GM10248 (cell line): ENCODE measurements at regions of chr1 and their contacts with region 1.

Region 1: DNA sequence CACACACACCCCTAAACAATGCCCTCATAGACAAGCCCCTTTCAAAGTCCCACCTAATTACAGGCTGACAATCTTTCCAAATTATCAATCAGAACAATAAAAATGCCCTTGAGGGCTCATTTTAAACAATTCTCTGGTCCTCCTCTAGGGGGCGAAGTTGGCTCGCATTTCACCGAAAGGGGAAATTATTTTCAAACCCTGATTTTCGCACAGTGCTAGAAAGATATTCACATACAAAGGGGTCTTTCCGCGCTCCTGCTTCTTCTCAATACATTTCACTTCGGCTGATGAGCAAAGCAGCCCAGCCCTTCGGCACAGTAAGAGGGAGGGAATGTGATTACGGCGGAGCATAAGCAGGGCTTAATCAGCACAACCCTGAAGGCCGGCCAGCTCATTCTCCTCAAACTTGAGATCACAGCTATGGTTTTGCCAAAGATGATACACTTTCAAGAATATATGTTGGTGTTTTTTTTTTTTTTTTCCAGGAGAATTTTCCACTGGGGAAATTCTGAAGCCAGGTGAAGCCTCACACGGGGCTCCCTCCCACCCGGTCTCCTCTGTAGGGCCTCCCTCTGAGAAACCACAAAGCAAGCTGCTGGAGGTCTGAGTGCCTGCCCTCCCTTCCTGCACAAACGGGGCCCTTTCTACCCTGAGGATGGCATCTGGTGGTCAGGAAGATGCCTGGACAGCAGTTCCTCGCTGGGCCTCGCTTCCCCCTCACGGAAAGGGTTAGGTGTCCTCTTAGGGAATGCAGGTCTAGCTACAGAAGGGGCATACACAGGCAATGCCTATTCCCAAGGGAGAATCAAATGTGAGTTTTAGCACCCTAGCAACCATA is 66.9 kb downstream of the GNG12 start:
- DNase-seq: peak; percentile 30
- CTCF ChIP-seq: peak; percentile 69

Region 2: DNA sequence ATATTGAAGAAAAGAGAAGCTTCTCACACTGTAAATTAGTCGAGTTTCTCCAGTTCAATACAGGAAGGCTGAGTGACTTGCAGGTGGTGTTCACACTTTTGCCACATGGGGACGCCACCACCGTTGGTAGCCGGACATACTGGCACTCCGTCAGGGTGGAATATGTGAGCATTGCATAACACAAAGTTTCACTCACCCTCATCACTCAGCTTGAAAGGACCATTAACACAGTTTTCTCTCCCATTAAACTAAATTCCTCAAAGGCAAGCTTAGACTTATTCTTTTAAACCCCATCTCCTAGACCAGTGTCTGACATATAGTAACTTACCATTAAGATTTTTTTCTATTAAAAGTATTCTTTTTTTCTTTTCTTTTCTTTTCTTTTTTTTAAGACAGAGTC is 230.9 kb before region 1 on chr1:
- CTCF ChIA-PET with region 1: interaction called, 31 read pairs
- POLR2A ChIA-PET with region 1: no interaction called
- DNase-seq: peak; percentile 43
- CTCF ChIP-seq: peak; percentile 50

Region 3: DNA sequence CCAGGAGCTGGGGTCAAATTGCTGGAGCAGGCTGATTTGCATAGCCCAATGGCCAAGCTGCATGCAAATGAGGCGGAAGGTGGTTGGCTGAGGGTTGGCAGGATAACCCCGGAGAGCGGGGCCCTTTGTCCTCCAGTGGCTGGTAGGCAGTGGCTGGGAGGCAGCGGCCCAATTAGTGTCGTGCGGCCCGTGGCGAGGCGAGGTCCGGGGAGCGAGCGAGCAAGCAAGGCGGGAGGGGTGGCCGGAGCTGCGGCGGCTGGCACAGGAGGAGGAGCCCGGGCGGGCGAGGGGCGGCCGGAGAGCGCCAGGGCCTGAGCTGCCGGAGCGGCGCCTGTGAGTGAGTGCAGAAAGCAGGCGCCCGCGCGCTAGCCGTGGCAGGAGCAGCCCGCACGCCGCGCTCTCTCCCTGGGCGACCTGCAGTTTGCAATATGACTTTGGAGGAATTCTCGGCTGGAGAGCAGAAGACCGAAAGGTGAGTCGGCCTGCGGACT is 81.2 kb before region 1 on chr1 and contains the start of gene GADD45A:
- CTCF ChIA-PET with region 1: interaction called, 16 read pairs
- POLR2A ChIA-PET with region 1: interaction called, 19 read pairs
- DNase-seq: peak; percentile 96
- CTCF ChIP-seq: no peak

Region 4: GRCh38 chr1:67749844-67750689 is 16.3 kb before region 1 on chr1:
- CTCF ChIA-PET with region 1: interaction called, 67 read pairs
- POLR2A ChIA-PET with region 1: no interaction called
- DNase-seq: no peak
- CTCF ChIP-seq: no peak

Region 5: DNA sequence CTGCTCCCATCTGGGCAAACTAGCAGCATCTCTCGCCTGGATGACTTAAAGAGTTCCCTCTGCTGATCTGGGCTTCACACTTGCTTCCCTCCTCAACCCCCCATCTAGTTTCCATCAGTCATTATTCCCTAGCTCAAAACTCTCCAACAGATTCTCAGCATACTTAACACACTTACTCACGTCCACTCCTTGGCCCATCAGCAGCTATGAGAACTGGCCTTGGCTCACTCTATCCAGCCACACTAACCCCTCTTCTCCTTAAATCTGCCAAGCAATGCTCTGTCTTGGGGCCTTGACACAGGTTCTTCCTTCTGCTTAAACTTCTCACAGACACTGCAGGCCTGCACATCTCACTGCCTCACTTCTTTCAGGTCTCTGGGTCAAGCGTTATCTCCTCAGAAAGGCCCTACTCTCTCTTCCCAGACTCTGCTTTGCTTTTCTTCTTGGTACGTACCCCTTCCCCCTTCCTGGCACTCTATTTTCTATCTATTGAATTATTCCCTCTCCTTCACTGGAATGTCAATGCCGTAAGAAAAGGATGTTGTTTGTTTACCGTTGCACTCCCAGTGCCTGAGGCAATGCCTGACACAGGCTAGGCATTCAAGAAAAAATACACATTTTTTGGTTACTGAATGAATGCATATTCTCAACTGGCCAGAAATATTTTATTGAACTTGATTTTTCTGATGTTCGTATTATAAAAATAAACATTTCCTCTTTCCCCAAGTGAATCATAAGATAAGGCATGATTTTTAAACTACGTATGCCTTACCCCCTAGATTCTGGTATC is 25.5 kb after region 1 on chr1:
- CTCF ChIA-PET with region 1: interaction called, 34 read pairs
- POLR2A ChIA-PET with region 1: no interaction called
- DNase-seq: no peak
- CTCF ChIP-seq: no peak

Region 6: GRCh38 chr1:67832737-67833601 is 66.6 kb after region 1 on chr1 and contains the start of gene GNG12:
- CTCF ChIA-PET with region 1: interaction called, 14 read pairs
- POLR2A ChIA-PET with region 1: no interaction called
- DNase-seq: peak; percentile 61
- CTCF ChIP-seq: no peak